Activated CD4-positive, alpha-beta T cell treated with anti-CD3 and anti-CD28 coated beads, Interleukin-2, amount 10 ng/mL, durations not matched to agents 24 days and 14 days (primary cell): ENCODE measurements at regions of chr2 and their contacts with region 1.

Region 1: GRCh38 chr2:202671317-202672035 is 36.7 kb downstream of the FAM117B start:
- DNase-seq: no peak
- H3K4me3 Mint-ChIP-seq: no peak overlapping the region
- H3K27ac Mint-ChIP-seq: no peak overlapping the region
- H3K4me1 Mint-ChIP-seq: peaks cover 33% of the 10 kb centered on the region
- H3K27me3 Mint-ChIP-seq: no peaks in the 10 kb centered on the region

Region 2: DNA sequence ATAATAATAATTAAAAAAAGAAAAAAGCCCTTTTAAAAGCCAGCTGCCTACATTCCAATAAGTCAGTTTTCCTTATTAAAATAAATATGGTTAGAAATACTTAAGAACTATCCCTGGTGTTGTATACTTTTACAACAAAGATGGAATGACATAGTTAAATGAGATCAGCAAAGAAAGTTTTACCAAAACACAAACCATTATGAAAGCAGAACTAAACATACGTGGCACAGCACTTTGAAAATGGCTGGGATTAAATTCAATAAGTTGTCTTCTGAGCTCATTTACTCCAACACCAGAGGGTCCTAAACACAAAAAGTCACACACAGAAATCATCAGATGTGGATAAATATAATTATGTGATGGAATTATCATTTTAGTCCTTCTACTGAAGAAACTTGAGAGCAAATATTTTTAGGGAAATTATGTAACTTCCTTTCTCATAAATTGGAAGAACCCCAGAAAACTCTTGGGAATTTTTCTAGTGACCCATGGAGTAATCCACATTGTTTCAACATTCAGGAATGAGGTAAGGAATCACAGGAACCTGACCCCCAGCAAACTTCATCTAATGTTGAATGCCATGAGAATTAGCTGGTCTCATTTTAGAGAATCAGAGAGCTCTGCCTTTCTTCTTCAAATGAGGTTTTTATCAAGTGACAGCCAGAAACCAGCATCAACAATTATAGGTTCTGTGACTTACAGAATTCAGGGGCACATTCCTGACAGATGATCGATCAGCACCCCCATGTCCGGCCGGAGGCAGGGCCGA is 1016.7 kb before region 1 on chr2:
- intact Hi-C with region 1: no loop called
- DNase-seq: no peak
- H3K4me3 Mint-ChIP-seq: no peak overlapping the region
- H3K27ac Mint-ChIP-seq: no peak overlapping the region
- H3K4me1 Mint-ChIP-seq: peaks cover 4% of the 10 kb centered on the region
- H3K27me3 Mint-ChIP-seq: peaks cover 39% of the 10 kb centered on the region

Region 3: GRCh38 chr2:202687276-202687675 is 15.8 kb after region 1 on chr2:
- intact Hi-C with region 1: loop called (anchors 2 kb)
- DNase-seq: no peak
- H3K4me3 Mint-ChIP-seq: no peak overlapping the region
- H3K27ac Mint-ChIP-seq: no peak overlapping the region
- H3K4me1 Mint-ChIP-seq: peaks cover 6% of the 10 kb centered on the region
- H3K27me3 Mint-ChIP-seq: no peaks in the 10 kb centered on the region

Region 4: DNA sequence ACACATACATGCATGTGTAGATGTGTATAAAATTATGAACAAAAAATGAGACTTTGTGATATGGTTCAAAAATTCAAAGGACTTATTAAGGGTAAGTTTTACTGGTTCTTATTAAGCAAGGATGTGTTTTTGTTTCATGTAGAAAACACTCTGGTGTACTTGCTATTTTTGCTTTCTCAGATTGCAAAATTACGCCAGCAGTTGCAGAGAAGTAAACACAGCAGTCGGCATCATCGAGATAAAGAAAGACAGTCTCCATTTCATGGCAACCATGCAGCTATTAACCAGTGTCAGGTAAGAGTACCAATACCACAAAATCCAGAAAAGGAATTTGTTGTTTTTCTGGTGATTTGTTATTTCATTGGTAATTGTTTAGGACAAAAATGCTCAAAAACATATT is 54.6 kb after region 1 on chr2:
- intact Hi-C with region 1: no loop called
- DNase-seq: no peak
- H3K4me3 Mint-ChIP-seq: no peak overlapping the region
- H3K27ac Mint-ChIP-seq: no peak overlapping the region
- H3K4me1 Mint-ChIP-seq: peaks cover 4% of the 10 kb centered on the region
- H3K27me3 Mint-ChIP-seq: no peaks in the 10 kb centered on the region

Region 5: GRCh38 chr2:203061346-203061745 is 389.9 kb after region 1 on chr2:
- intact Hi-C with region 1: no loop called
- DNase-seq: no peak
- H3K4me3 Mint-ChIP-seq: no peak overlapping the region
- H3K27ac Mint-ChIP-seq: no peak overlapping the region
- H3K4me1 Mint-ChIP-seq: no peaks in the 10 kb centered on the region
- H3K27me3 Mint-ChIP-seq: no peaks in the 10 kb centered on the region